Mammary epithelial cell (primary cell): ENCODE measurements at regions of chr15 and their contacts with region 1.

Region 1: GRCh38 chr15:80788536-80788935 is 9.4 kb downstream of the CEMIP start:
- DNase-seq: no peak
- H3K4me3 ChIP-seq: no peak overlapping the region
- H3K27ac ChIP-seq: no peak overlapping the region
- H3K4me1 ChIP-seq: peaks cover 6% of the 10 kb centered on the region
- H3K27me3 ChIP-seq: no peaks in the 10 kb centered on the region
- CTCF ChIP-seq: no peak

Region 2: GRCh38 chr15:80475572-80475971 is 313.0 kb before region 1 on chr15:
- CTCF ChIA-PET with region 1: no interaction called
- dilution Hi-C with region 1: loop called (anchors 10 kb)
- in situ Hi-C with region 1: no loop called
- intact Hi-C with region 1: no loop called
- DNase-seq: no peak
- H3K4me3 ChIP-seq: no peak overlapping the region
- H3K27ac ChIP-seq: no peak overlapping the region
- H3K4me1 ChIP-seq: no peaks in the 10 kb centered on the region
- H3K27me3 ChIP-seq: no peaks in the 10 kb centered on the region
- CTCF ChIP-seq: peak in 1 of 2 donors; percentile 23

Region 3: GRCh38 chr15:80804965-80805495 is 16.5 kb after region 1 on chr15:
- CTCF ChIA-PET with region 1: interaction called, 17 read pairs
- dilution Hi-C with region 1: no loop called
- in situ Hi-C with region 1: no loop called
- intact Hi-C with region 1: no loop called
- DNase-seq: no peak
- H3K4me3 ChIP-seq: no peak overlapping the region
- H3K27ac ChIP-seq: no peak overlapping the region
- H3K4me1 ChIP-seq: no peaks in the 10 kb centered on the region
- H3K27me3 ChIP-seq: no peaks in the 10 kb centered on the region
- CTCF ChIP-seq: no peak